ENCODE measurements at regions of chr18 and their contacts with region 1.

Region 1: DNA sequence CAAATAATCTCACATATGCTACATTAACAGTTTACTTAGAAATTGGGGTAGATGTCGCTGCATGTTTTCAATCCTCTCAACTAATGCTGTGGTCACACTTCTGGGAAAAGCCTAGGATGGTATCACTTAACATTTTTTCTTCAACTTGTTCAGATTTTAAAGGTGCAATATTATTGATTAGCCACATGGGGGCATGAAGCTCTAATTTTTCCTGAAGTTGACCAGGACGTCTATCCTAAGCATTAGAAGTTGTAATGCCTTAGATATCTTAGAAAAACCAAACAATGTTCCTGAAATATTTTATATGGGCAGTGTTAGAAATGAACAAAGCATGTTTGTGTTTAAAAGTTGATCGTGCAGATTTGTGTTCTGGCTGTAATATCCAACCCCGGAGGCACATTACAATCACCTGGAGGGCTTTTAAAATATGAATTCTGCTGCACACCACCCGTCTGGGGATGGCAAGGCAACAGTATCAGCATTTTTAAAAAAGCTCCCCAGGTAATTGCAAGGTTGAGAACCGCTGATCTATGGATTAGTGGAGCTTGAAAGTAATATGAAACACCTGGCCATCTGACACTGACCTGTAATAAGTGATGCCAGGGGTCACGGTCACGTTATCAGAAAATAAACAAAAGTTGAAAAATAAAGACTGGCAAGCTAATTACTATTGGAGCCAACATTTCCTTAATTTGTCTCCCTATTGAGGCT is 100.5 kb upstream of the LMAN1 start:
- DNase-seq: no peak
- H3K4me3 ChIP-seq: no peak overlapping the region
- H3K27ac ChIP-seq: no peak overlapping the region
- H3K4me1 ChIP-seq: no peaks in the 10 kb centered on the region
- H3K27me3 ChIP-seq: no peaks in the 10 kb centered on the region
- CTCF ChIP-seq: peak; percentile 60 to 76 (median 66)
- POLR2A ChIP-seq: no peak

Region 2: GRCh38 chr18:59823596-59824195 is 364.2 kb after region 1 on chr18:
- intact Hi-C with region 1: loop called (anchors 5 kb)
- DNase-seq: peak; percentile 70 to 77
- H3K4me3 ChIP-seq: no peak overlapping the region
- H3K27ac ChIP-seq: no peak overlapping the region
- H3K4me1 ChIP-seq: no peaks in the 10 kb centered on the region
- H3K27me3 ChIP-seq: no peaks in the 10 kb centered on the region
- CTCF ChIP-seq: peak; percentile 73 to 88 (median 81)
- POLR2A ChIP-seq: no peak

Measured in uterus (tissue), 4 donors.